Common myeloid progenitor, CD34-positive (primary cell): ENCODE measurements at regions of chr6 and their contacts with region 1.

Region 1: GRCh38 chr6:90160013-90160412 is 136.6 kb downstream of the BACH2 start:
- DNase-seq: peak; percentile 31 to 90 (median 78)
- H3K4me3 ChIP-seq: peak overlapping the region in 2 of 7 experiments; percentile 26 to 35
- H3K27ac ChIP-seq: peak overlapping the region; percentile 52 to 60
- H3K4me1 ChIP-seq: peaks cover 20 to 26% (median 22%) of the 10 kb centered on the region in 4 experiments
- H3K27me3 ChIP-seq: no peaks in the 10 kb centered on the region

Region 2: DNA sequence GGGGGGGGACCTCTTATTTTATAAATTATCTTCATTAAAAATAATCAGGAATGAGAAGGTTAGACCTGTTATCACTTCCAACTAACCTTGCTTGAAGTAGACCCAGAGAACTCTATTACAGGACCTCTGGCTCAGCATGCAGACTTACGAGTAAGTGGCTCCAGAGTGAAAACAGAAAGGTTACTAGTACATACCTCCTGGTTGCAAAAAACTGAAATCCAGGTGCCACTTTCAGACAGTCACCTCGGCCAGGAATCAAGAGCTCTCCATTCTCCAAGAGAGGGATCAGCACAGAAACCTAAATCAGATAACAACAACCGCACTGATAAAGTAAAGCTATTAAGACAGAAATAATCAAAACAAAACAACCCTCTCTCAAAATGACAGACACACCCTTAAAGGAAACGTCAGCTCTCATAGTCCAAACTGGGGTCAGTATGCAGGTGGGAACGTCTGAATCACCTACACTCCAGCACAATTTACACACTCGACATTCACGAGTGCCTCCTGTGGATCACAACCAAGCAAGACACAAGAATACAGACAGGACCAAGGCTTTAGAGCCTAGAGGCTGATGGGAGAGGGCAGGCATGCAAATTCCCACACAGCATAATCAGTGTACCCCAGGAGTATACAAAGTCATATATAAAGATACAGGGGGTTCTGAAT is 372.2 kb before region 1 on chr6:
- CTCF ChIA-PET with region 1: no interaction called
- POLR2A ChIA-PET with region 1: no interaction called
- DNase-seq: no peak
- H3K4me3 ChIP-seq: no peak overlapping the region
- H3K27ac ChIP-seq: no peak overlapping the region
- H3K4me1 ChIP-seq: peaks cover 0 to 1% (median under 1%) of the 10 kb centered on the region in 4 experiments
- H3K27me3 ChIP-seq: no peaks in the 10 kb centered on the region

Region 3: DNA sequence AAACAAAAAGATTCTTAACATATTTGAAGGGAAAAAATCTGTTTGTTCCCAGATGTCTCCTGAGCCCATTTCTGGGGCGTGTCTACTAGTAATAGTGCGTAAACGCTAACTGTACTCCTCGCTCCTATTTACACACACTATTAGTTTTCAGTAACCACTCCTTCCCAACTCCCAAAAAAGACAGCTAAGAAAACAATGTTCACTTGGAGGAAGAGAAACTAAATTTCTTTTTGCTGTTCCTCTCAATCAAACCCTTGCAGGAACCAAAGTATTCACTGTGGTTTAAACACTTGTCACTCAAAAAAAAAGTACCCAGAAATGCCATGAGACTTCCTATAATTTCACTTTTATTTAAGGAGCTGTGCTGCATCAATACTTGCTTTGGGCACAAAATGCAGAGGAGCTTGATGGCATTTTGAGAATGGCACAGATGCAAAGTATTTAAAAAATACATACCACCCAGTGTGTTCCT is 18.4 kb after region 1 on chr6:
- CTCF ChIA-PET with region 1: interaction called, 14 read pairs
- POLR2A ChIA-PET with region 1: no interaction called
- DNase-seq: peak in 2 of 3 donors; percentile 70 to 77
- H3K4me3 ChIP-seq: peak overlapping the region in 4 of 7 experiments; percentile 13 to 61 (median 41)
- H3K27ac ChIP-seq: peak overlapping the region in 1 of 2 experiments; percentile 44
- H3K4me1 ChIP-seq: peaks cover 15 to 34% (median 23%) of the 10 kb centered on the region in 4 experiments
- H3K27me3 ChIP-seq: no peaks in the 10 kb centered on the region

Region 4: DNA sequence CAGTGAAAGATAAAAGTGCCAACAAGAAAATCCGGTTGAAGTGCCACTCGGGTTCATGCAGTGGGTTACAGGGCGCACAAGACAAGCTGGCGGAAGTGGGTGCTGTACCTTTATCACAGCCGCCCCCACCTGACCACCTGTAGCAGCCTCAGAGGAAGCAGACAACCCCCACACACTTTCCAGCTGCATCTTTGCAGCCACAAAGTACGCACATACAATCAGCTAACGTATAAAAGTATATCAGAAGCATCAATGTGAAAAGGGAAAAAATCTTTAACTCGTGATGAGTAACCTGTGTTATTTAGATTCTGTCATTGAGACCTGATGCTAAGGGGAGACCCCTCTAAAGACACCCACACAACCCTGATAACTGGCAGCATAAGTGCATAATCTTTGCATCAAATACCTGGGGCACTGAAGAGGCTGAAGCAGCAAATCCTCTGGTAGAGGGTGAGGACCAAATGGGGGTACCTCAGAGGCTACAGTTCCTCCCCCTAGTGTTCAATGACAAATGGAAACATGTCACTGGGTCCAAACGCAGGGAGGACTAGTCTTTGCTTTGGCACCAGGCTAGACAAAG is 114.5 kb after region 1 on chr6:
- CTCF ChIA-PET with region 1: no interaction called
- POLR2A ChIA-PET with region 1: no interaction called
- DNase-seq: peak in 2 of 3 donors; percentile 59 to 70
- H3K4me3 ChIP-seq: no peak overlapping the region
- H3K27ac ChIP-seq: no peak overlapping the region
- H3K4me1 ChIP-seq: peaks cover 0 to 17% (median 4%) of the 10 kb centered on the region in 4 experiments
- H3K27me3 ChIP-seq: no peaks in the 10 kb centered on the region

Region 5: GRCh38 chr6:90463359-90463758 is 303.3 kb after region 1 on chr6:
- CTCF ChIA-PET with region 1: no interaction called
- POLR2A ChIA-PET with region 1: no interaction called
- DNase-seq: no peak
- H3K4me3 ChIP-seq: no peak overlapping the region
- H3K27ac ChIP-seq: no peak overlapping the region
- H3K4me1 ChIP-seq: peaks cover 0 to 11% (median 1%) of the 10 kb centered on the region in 4 experiments
- H3K27me3 ChIP-seq: no peaks in the 10 kb centered on the region